IMR-90 (cell line): ENCODE measurements at regions of chr9 and their contacts with region 1.

Region 1: DNA sequence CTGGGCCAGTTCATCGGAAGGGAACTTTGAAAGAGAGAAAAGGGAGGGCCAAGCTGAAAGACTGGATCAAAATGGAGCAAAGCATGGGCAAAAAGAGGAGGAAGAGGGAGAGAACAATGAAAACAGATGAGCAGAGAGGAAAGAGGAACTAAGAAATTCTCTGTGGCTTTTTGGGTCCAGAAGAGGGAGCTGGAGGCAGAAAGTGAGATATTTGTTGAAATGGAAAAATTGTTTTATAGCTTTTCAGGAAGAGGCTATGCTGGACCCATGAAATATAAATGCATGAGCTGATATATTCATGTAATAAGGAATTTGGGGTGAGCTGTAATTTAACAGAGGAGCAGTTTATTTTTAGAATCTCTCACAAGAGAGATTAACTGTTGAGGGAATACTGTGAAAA is 457.3 kb downstream of the DMAC1 start:
- DNase-seq: no peak
- ATAC-seq: peak; percentile 46; the same call in 1 of the 2 replicates
- H3K4me3 ChIP-seq: no peak overlapping the region
- H3K27ac ChIP-seq: peak overlapping the region; percentile 55; the same call in 1 of the 2 replicates
- H3K4me1 ChIP-seq: peaks cover 3% of the 10 kb centered on the region
- H3K27me3 ChIP-seq: no peaks in the 10 kb centered on the region
- CTCF ChIP-seq: peak; percentile 24; the same call in 1 of the 2 replicates
- POLR2A ChIP-seq: no peak
- RAD21 ChIP-seq: 0 out of 2 replicates have a peak, but pooled peaks have one; percentile 2

Region 2: GRCh38 chr9:7415836-7416235 is 73.6 kb after region 1 on chr9:
- CTCF ChIA-PET with region 1: no interaction called
- POLR2A ChIA-PET with region 1: interaction called, 12 read pairs
- dilution Hi-C with region 1: no loop called
- in situ Hi-C with region 1: no loop called
- intact Hi-C with region 1: no loop called
- DNase-seq: no peak
- ATAC-seq: no peak
- H3K4me3 ChIP-seq: no peak overlapping the region
- H3K27ac ChIP-seq: no peak overlapping the region
- H3K4me1 ChIP-seq: no peaks in the 10 kb centered on the region
- H3K27me3 ChIP-seq: no peaks in the 10 kb centered on the region
- CTCF ChIP-seq: no peak
- POLR2A ChIP-seq: no peak
- RAD21 ChIP-seq: no peak